ENCODE measurements at regions of chr11 and their contacts with region 1.

Region 1: GRCh38 chr11:19879307-19880087 is 166.9 kb downstream of the NAV2 start:
- DNase-seq: no peak
- H3K4me3 ChIP-seq: no peak overlapping the region
- H3K27ac ChIP-seq: no peak overlapping the region
- H3K4me1 ChIP-seq: no peaks in the 10 kb centered on the region
- H3K27me3 ChIP-seq: no peaks in the 10 kb centered on the region
- CTCF ChIP-seq: no peak
- POLR2A ChIP-seq: no peak

Region 2: GRCh38 chr11:19808076-19808911 is 71.2 kb before region 1 on chr11:
- intact Hi-C with region 1: no loop called
- DNase-seq: no peak
- H3K4me3 ChIP-seq: no peak overlapping the region
- H3K27ac ChIP-seq: no peak overlapping the region
- H3K4me1 ChIP-seq: peaks cover 3% of the 10 kb centered on the region
- H3K27me3 ChIP-seq: no peaks in the 10 kb centered on the region
- CTCF ChIP-seq: no peak
- POLR2A ChIP-seq: no peak

Region 3: GRCh38 chr11:21072558-21072957 is 1193.1 kb after region 1 on chr11:
- intact Hi-C with region 1: loop called (anchors 5 kb)
- DNase-seq: no peak
- H3K4me3 ChIP-seq: no peak overlapping the region
- H3K27ac ChIP-seq: no peak overlapping the region
- H3K4me1 ChIP-seq: no peaks in the 10 kb centered on the region
- H3K27me3 ChIP-seq: no peaks in the 10 kb centered on the region
- CTCF ChIP-seq: no peak
- POLR2A ChIP-seq: no peak